ENCODE measurements at regions of chr13 and their contacts with region 1.

Region 1: DNA sequence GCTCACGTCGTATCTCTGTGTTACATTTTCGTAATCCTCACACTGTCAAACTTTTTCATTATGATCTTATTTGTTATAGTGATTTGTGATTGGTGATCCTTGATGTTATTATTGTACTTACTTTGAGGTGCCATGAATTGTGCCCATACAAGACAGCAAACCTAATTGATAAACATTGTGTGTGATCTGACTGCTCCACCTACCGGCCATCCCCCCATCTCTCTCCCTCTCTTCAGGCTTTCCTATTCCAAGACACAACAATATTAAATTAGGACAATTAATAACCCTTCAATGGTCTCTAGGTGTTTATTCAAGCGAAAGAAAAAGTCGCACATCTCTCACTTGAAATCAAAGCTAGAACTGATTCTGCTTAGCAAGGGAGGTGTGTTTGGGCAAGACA is 349.3 kb downstream of the RBM26 start:
- DNase-seq: no peak
- ATAC-seq: no peak
- H3K4me3 ChIP-seq: no peak overlapping the region
- H3K27ac ChIP-seq: no peak overlapping the region
- H3K4me1 ChIP-seq: no peaks in the 10 kb centered on the region
- H3K27me3 ChIP-seq: no peaks in the 10 kb centered on the region
- CTCF ChIP-seq: peak; percentile 20; the same call in 1 of the 2 replicates
- EP300 ChIP-seq: no peak
- POLR2A ChIP-seq: no peak
- RAD21 ChIP-seq: no peak

Region 2: GRCh38 chr13:78137404-78138142 is 919.1 kb before region 1 on chr13:
- CTCF ChIA-PET with region 1: no interaction called
- POLR2A ChIA-PET with region 1: no interaction called
- in situ Hi-C with region 1: no loop called
- intact Hi-C with region 1: loop called (anchors 2 kb)
- DNase-seq: peak; percentile 58
- ATAC-seq: peak; percentile 99
- H3K4me3 ChIP-seq: no peak overlapping the region
- H3K27ac ChIP-seq: no peak overlapping the region
- H3K4me1 ChIP-seq: no peaks in the 10 kb centered on the region
- H3K27me3 ChIP-seq: no peaks in the 10 kb centered on the region
- CTCF ChIP-seq: peak; percentile 78
- EP300 ChIP-seq: no peak
- POLR2A ChIP-seq: no peak
- RAD21 ChIP-seq: peak; percentile 35; the same call in 1 of the 2 replicates